Dorsolateral prefrontal cortex (tissue), 120 donors: ENCODE measurements at regions of chr2 and their contacts with region 1.

Region 1: DNA sequence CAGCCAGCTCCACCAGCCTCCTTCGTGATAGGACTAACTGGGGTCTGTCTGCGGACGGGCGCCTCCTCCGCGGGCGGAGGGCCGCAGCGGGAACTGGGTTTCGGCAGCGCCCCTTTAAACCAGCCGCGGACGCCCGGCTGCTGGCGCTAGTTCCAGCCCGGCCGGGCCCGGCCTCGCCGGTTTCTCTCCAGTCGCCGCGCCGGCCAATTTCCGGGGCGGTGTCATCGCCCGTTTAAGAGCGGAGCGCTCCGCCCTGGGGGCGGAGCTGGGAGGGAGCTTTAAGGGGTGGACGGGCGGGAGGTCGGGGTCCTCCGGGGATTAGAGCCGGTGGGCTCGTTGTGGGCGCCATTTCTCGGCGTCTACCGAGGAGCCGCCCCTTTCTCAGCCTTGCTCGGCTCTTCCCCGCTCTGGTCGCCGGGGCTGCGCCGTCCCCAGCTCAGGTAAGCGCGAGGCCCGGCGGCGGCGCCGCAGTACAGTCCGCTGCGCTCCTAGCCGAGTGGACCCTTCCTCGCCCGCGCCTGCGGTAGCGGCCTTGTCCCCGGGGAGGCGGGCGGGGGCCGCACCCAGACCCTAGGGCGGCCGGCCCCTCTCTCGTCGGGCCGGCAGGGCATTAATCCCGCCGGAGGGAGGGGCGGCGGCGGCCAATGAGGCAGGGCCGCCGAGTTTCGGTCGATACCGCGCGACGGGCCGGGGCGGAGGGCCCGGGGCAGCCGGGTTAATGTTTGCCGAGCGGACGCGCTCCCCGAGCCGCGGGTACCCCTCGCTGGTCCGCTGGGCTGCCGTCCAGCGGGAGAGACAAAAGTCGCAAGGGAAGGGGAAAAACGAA is at the start of gene EPB41L5:
- DNase-seq: peak; percentile 70 to 93 (median 88)
- H3K4me3 ChIP-seq: peak within 1 kb of the TSS; percentile 71 to 100 (median 96)
- H3K27ac ChIP-seq: peak within 1 kb of the TSS in 54 of 59 donors; percentile 6 to 94 (median 76)
- H3K27me3 ChIP-seq: no peaks in the 10 kb centered on the region
- CTCF ChIP-seq: peak in 32 of 56 donors; percentile 5 to 60 (median 28)
- total RNA-seq, gene EPB41L5: 25.6 to 72.0 (median 49.6) TPM

Region 2: DNA sequence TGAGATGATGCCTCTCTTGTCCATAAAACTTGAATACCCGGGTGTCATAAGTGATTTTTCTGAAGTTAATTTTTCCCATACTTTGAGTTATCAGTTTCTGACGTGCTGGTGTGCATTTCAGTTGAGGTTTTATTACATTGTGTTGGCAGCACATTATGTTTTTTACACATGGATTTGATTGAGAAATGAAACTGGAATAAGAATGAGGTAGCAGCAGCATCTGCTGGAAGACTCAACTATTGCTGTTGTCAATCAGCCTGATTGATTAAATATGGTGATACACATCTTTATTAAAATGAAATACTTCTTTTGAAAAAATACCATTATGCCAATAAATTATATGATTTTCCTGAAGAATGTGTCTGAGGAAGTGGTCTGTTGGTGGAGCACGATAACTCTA is 1864.2 kb before region 1 on chr2:
- intact Hi-C with region 1: no loop called
- DNase-seq: no peak
- H3K4me3 ChIP-seq: no peak overlapping the region
- H3K27ac ChIP-seq: no peak overlapping the region
- H3K27me3 ChIP-seq: peaks cover 0 to 21% (median 0%) of the 10 kb centered on the region in 45 donors
- CTCF ChIP-seq: no peak

Region 3: DNA sequence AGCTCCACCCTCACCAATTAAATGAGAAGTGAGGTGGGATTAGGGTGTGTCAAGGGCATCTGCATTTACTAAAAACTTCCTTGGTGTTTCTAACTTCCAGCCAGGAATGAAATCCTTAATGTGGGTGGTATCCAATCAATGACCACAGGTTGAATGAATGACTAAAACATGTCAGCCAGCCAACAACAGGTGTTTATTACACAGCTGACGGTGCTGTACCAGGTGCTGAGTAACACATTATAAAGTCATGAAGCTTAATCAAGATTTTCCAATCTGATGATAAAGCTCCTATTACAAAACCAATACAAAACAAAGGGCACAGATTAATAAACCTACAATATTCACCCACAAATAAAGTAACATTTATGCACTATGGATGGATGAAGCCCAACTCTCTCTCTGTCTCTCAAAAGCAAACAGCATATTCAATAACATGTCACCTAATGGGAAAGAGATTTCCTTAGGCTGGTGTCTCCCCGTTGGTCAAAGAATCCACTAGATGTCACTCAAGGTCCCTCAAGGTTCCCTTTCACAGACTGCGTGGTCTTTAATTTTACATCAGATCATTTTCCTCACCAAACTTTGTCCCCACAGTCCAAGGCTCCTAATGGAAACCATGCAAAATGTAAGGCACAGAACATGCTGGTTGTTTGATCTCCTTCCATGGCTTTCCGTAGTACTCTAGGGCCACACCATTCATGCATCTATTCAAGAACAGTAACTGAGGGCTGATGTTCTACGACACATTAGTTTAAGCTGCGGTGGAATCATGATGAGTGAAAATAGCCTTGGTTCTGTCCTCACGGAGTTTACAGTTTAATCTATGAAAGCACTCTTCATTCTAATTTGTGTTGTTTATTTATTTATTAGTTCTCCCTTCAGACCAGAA is 259.7 kb before region 1 on chr2:
- intact Hi-C with region 1: loop called (anchors 5 kb)
- DNase-seq: peak in 1 of 10 donors; percentile 30
- H3K4me3 ChIP-seq: no peak overlapping the region
- H3K27ac ChIP-seq: peak overlapping the region in 1 of 59 donors; percentile 24
- H3K27me3 ChIP-seq: no peaks in the 10 kb centered on the region
- CTCF ChIP-seq: peak in 55 of 56 donors; percentile 21 to 84 (median 62)

Region 4: GRCh38 chr2:119759451-119760236 is 253.3 kb before region 1 on chr2 and contains the start of gene PTPN4:
- intact Hi-C with region 1: loop called (anchors 5 kb)
- DNase-seq: peak; percentile 73 to 95 (median 91)
- H3K4me3 ChIP-seq: peak within 1 kb of the TSS; percentile 72 to 98 (median 87)
- H3K27ac ChIP-seq: peak within 1 kb of the TSS; percentile 84 to 99 (median 96)
- H3K27me3 ChIP-seq: no peaks in the 10 kb centered on the region
- CTCF ChIP-seq: peak in 30 of 56 donors; percentile 6 to 54 (median 30)
- total RNA-seq, gene PTPN4: 78.4 to 183 (median 137) TPM

Region 5: DNA sequence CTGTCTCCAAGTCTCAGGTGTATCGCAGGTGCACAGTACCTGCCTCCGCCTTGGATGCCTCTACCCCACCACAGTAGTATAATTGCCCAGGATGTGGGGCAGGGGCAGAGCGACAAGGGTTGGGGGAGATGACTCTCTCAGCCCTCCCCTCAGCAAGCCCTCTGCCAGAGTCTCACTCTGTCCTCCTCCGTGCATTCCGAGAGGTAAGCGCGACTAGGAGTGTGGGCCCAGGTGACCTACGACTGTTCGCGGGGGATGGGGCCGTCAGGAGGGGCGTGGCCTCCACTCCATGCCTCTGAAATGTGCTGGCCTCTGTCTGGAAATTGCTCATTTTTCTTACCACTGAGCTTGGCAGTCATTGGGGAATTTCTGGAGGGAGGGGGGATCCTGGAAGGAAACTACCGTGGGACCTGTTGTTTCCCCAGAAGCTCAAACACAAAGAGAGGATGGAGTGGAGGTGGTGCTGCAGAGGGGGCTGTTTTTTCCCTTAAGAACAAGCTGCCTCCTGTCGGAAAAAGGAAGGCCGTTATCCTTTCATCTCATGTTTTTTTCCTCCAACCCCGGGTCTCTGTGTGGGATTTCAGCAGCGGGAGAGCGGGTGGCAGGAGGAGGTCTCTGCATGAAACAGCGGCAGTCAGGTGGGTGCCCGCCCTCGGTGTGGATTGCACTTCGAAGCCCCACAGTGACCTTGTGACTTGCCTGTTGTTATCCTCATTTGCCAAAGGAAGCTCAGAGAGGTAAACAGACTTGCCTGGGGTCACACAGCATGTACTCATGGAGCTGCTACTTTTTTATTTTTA is 226.7 kb after region 1 on chr2:
- intact Hi-C with region 1: no loop called
- DNase-seq: no peak
- H3K4me3 ChIP-seq: no peak overlapping the region
- H3K27ac ChIP-seq: peak overlapping the region in 3 of 59 donors; percentile 1 to 36 (median 28)
- H3K27me3 ChIP-seq: peaks cover 0 to 6% (median 0%) of the 10 kb centered on the region in 45 donors
- CTCF ChIP-seq: no peak